ENCODE measurements at regions of chr19 and their contacts with region 1.

Region 1: DNA sequence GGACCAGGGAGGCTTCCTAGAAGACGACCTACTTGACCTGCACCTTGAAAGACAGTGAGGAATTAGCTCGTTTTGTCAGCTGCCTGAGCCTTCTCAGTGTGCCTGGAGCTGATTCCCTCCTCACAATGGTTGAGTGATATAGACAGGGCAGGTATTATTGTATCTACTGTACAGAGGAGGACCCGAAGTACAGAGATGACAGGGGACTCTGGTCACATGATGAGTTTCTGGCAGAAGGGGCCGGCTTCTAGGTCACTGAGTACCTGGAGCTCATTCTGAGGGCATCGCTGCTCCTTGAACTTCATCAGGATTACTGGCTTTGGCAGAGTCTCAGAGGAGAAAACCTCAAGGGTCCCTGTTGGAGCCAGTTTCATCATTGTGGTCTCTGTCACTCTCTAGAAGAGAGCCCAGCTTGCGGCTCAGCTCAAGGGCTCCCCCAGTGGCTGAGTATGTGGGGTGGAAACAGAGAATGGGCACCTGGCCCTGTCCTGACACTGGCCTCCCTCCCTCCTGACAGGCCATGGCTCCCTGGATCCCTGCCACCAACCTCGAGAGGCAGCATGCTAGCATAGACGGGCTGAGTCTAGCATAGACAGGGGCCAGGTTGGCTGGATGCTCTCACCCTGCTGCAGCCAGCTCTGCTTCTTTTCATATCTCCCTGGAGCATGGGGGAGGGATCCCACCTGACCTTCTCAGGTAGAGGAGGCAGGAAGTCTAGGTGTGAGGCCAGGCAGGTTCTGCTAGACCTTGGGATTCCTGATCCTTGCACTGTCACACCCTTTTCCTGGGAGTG is 38.7 kb downstream of the NFIX start:
- DNase-seq: peak in 1 of 2 experiments; percentile 71
- H3K4me3 ChIP-seq: no peak overlapping the region
- H3K4me3 Mint-ChIP-seq: no peak overlapping the region
- H3K27ac Mint-ChIP-seq: no peak overlapping the region
- H3K4me1 ChIP-seq: peaks cover 19% of the 10 kb centered on the region
- H3K4me1 Mint-ChIP-seq: peaks cover 25% of the 10 kb centered on the region
- H3K27me3 ChIP-seq: no peaks in the 10 kb centered on the region; the same call in none of the 2 replicates
- H3K27me3 Mint-ChIP-seq: peaks cover 2% of the 10 kb centered on the region
- CTCF ChIP-seq: peak; percentile 51 to 81

Region 2: GRCh38 chr19:12974301-12975220 is 59.5 kb before region 1 on chr19:
- CTCF ChIA-PET with region 1: interaction called, 10 read pairs
- POLR2A ChIA-PET with region 1: no interaction called
- intact Hi-C with region 1: loop called (anchors 2 kb)
- DNase-seq: no peak
- H3K4me3 ChIP-seq: no peak overlapping the region
- H3K4me3 Mint-ChIP-seq: no peak overlapping the region
- H3K27ac Mint-ChIP-seq: no peak overlapping the region
- H3K4me1 ChIP-seq: no peaks in the 10 kb centered on the region
- H3K4me1 Mint-ChIP-seq: peaks cover 7% of the 10 kb centered on the region
- H3K27me3 ChIP-seq: no peaks in the 10 kb centered on the region
- H3K27me3 Mint-ChIP-seq: no peaks in the 10 kb centered on the region
- CTCF ChIP-seq: no peak

Region 3: GRCh38 chr19:13051267-13052165 is 17.5 kb after region 1 on chr19:
- CTCF ChIA-PET with region 1: interaction called, 4 read pairs
- POLR2A ChIA-PET with region 1: interaction called, 4 read pairs
- intact Hi-C with region 1: loop called (anchors 1 kb)
- DNase-seq: peak; percentile 93
- H3K4me3 ChIP-seq: no peak overlapping the region
- H3K4me3 Mint-ChIP-seq: peak overlapping the region; percentile 44
- H3K27ac Mint-ChIP-seq: no peak overlapping the region
- H3K4me1 ChIP-seq: peaks cover 17% of the 10 kb centered on the region
- H3K4me1 Mint-ChIP-seq: peaks cover 11% of the 10 kb centered on the region
- H3K27me3 ChIP-seq: peaks cover 9% of the 10 kb centered on the region
- H3K27me3 Mint-ChIP-seq: peaks cover 38% of the 10 kb centered on the region
- CTCF ChIP-seq: no peak

Region 4: DNA sequence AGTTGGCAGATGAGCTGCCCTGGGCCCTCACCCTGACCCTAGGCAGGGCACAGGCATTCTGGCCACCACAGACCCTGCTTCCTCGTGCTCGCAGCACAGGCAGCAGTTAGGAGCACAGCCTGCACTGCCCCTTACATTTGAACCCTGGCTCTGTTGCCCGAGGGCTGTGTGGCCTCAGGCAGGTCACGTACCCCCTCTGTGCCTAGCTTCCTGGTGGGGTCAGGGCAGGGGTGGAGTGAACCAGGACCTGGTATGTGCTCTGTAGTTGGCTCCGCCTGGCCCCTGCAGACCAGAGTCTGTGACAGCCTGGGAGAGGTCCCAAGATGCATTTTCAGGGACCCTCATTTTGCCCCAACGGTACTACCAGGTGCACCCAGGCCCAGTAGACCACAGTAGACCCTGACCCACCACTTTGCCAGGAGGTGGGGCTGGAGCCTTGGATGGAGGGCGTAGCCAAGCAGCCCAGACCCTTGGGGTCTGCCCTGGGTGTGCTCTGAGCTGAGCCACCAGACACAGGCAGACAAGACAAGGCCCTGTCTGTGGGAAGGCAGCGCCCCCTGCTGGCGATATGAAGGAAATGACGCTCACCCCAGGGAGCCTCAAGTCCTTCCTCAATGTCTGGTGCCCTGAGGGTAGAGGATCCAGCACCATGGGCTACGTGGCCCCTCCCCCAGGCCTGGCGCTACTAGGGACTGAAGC is 59.5 kb after region 1 on chr19:
- CTCF ChIA-PET with region 1: no interaction called
- POLR2A ChIA-PET with region 1: no interaction called
- intact Hi-C with region 1: loop called (anchors 5 kb)
- DNase-seq: peak; percentile 68 to 76
- H3K4me3 ChIP-seq: no peak overlapping the region
- H3K4me3 Mint-ChIP-seq: no peak overlapping the region
- H3K27ac Mint-ChIP-seq: no peak overlapping the region
- H3K4me1 ChIP-seq: no peaks in the 10 kb centered on the region
- H3K4me1 Mint-ChIP-seq: peaks cover 11% of the 10 kb centered on the region
- H3K27me3 ChIP-seq: no peaks in the 10 kb centered on the region; the same call in 1 of the 2 replicates
- H3K27me3 Mint-ChIP-seq: peaks cover 10% of the 10 kb centered on the region
- CTCF ChIP-seq: peak; percentile 84 to 92

Measured in Caco-2 (cell line).